ENCODE measurements at regions of chr1 and their contacts with region 1.

Region 1: GRCh38 chr1:93304716-93305138 is 41.0 kb upstream of the DR1 start:
- DNase-seq: peak; percentile 25 to 62
- H3K4me3 ChIP-seq: no peak overlapping the region
- H3K27ac ChIP-seq: no peak overlapping the region
- H3K4me1 ChIP-seq: no peaks in the 10 kb centered on the region
- H3K27me3 ChIP-seq: no peaks in the 10 kb centered on the region
- CTCF ChIP-seq: peak; percentile 99

Region 2: GRCh38 chr1:93345633-93346420 is 41.1 kb after region 1 on chr1 and contains the start of gene DR1:
- CTCF ChIA-PET with region 1: interaction called, 4 read pairs
- POLR2A ChIA-PET with region 1: no interaction called
- intact Hi-C with region 1: loop called (anchors 1 kb)
- DNase-seq: peak; percentile 84 to 94
- H3K4me3 ChIP-seq: peak within 1 kb of the TSS; percentile 86
- H3K27ac ChIP-seq: peak within 1 kb of the TSS; percentile 86
- H3K4me1 ChIP-seq: peaks cover 35% of the 10 kb centered on the region
- H3K27me3 ChIP-seq: no peaks in the 10 kb centered on the region
- CTCF ChIP-seq: no peak
- total RNA-seq, gene DR1: 33.6 and 37.8 TPM in 2 replicates

Region 3: DNA sequence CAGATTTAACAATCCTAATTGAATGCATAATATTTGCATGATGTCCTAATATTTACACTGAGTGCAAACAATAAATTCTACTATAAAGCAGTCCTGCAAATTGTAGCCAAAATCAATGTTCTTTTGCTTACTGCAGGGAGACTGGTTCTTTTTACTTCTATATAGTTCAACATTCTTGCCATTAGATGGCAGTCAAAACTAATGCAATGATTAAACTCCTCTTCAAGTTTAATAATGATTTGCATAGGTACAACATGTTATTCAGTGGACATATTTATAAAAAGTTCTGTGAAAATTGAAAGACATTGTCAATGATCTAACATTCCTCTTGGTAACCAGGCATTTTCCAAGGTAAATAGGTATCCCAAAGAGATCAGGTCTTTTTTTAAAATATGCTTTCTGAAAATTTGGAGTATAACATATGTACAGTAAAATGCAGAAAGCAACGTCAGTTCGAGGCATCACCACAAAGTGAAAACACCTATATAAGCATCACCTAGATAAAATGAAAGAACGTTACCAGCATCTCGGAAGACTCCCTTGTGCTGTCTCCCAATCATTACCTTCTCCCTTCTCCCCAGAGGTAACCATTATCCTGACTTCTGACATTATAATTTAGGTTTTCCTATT is 133.4 kb after region 1 on chr1:
- CTCF ChIA-PET with region 1: interaction called, 6 read pairs
- POLR2A ChIA-PET with region 1: no interaction called
- intact Hi-C with region 1: loop called (anchors 2 kb)
- DNase-seq: peak in 1 of 2 experiments; percentile 70
- H3K4me3 ChIP-seq: no peak overlapping the region
- H3K27ac ChIP-seq: no peak overlapping the region
- H3K4me1 ChIP-seq: peaks cover 14% of the 10 kb centered on the region
- H3K27me3 ChIP-seq: no peaks in the 10 kb centered on the region
- CTCF ChIP-seq: peak; percentile 96

Region 4: GRCh38 chr1:93471911-93472310 is 167.2 kb after region 1 on chr1:
- CTCF ChIA-PET with region 1: no interaction called
- POLR2A ChIA-PET with region 1: interaction called, 10 read pairs
- intact Hi-C with region 1: no loop called
- DNase-seq: no peak
- H3K4me3 ChIP-seq: no peak overlapping the region
- H3K27ac ChIP-seq: no peak overlapping the region
- H3K4me1 ChIP-seq: no peaks in the 10 kb centered on the region
- H3K27me3 ChIP-seq: no peaks in the 10 kb centered on the region
- CTCF ChIP-seq: no peak

Region 5: GRCh38 chr1:93542398-93542797 is 237.7 kb after region 1 on chr1:
- CTCF ChIA-PET with region 1: interaction called, 16 read pairs
- POLR2A ChIA-PET with region 1: no interaction called
- intact Hi-C with region 1: no loop called
- DNase-seq: no peak
- H3K4me3 ChIP-seq: no peak overlapping the region
- H3K27ac ChIP-seq: no peak overlapping the region
- H3K4me1 ChIP-seq: no peaks in the 10 kb centered on the region
- H3K27me3 ChIP-seq: no peaks in the 10 kb centered on the region
- CTCF ChIP-seq: no peak

Measured in PC-9 (cell line).